ENCODE measurements at regions of chr9 and their contacts with region 1.

Region 1: GRCh38 chr9:78369639-78370219 is 72.8 kb downstream of the PSAT1 start:
- DNase-seq: peak; percentile 79
- H3K4me3 ChIP-seq: peak overlapping the region in 1 of 2 experiments; percentile 36; a peak in 1 of 4 replicates
- H3K27ac ChIP-seq: no peak overlapping the region
- H3K4me1 ChIP-seq: peaks cover 0 to 5% of the 10 kb centered on the region in 2 experiments; a peak in 1 of 4 replicates
- H3K27me3 ChIP-seq: no peaks in the 10 kb centered on the region; the same call in 1 of the 2 replicates
- CTCF ChIP-seq: peak; percentile 86
- EP300 ChIP-seq: no peak
- RAD21 ChIP-seq: peak; percentile 90

Region 2: DNA sequence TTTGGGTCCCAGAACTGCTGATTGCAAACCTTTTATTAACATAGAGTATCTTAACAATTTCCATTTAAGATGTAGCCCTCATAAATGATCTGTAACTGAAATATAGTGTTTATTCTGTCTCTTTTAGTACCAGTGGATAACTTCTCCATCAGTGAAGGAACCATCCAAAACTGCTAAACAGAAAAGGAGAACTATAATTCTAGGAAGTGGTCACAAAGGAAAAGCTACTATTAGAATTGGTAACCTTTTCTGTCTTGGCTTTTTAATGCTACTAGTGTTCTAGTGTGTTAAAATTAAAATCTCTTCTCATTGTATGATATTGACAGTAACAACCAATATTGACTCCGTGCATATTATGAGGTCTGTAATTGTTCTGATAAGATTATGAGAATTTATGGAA is 121.1 kb before region 1 on chr9:
- CTCF ChIA-PET with region 1: interaction called, 10 read pairs
- POLR2A ChIA-PET with region 1: no interaction called
- DNase-seq: no peak
- H3K4me3 ChIP-seq: no peak overlapping the region
- H3K27ac ChIP-seq: no peak overlapping the region
- H3K4me1 ChIP-seq: peaks cover 0 to 6% of the 10 kb centered on the region in 2 experiments; a peak in 1 of 4 replicates
- H3K27me3 ChIP-seq: no peaks in the 10 kb centered on the region
- CTCF ChIP-seq: no peak
- EP300 ChIP-seq: no peak
- RAD21 ChIP-seq: no peak

Region 3: GRCh38 chr9:78261403-78262001 is 108.2 kb before region 1 on chr9:
- CTCF ChIA-PET with region 1: interaction called, 82 read pairs
- POLR2A ChIA-PET with region 1: no interaction called
- DNase-seq: peak; percentile 40
- H3K4me3 ChIP-seq: no peak overlapping the region; a peak in 1 of 4 replicates
- H3K27ac ChIP-seq: no peak overlapping the region
- H3K4me1 ChIP-seq: no peaks in the 10 kb centered on the region; a peak in 1 of 4 replicates
- H3K27me3 ChIP-seq: no peaks in the 10 kb centered on the region
- CTCF ChIP-seq: peak; percentile 75
- EP300 ChIP-seq: no peak
- RAD21 ChIP-seq: peak; percentile 80

Region 4: GRCh38 chr9:78325343-78325742 is 44.4 kb before region 1 on chr9:
- CTCF ChIA-PET with region 1: interaction called, 11 read pairs
- POLR2A ChIA-PET with region 1: no interaction called
- DNase-seq: peak; percentile 76
- H3K4me3 ChIP-seq: no peak overlapping the region
- H3K27ac ChIP-seq: peak overlapping the region in 1 of 2 experiments; percentile 99; a peak in 2 of 4 replicates
- H3K4me1 ChIP-seq: peaks cover 0 to 36% of the 10 kb centered on the region in 2 experiments; a peak in 2 of 4 replicates
- H3K27me3 ChIP-seq: no peaks in the 10 kb centered on the region
- CTCF ChIP-seq: no peak
- EP300 ChIP-seq: peak; percentile 25 to 90; a peak in 3 of 4 replicates
- RAD21 ChIP-seq: no peak

Region 5: GRCh38 chr9:78357165-78357873 is 12.4 kb before region 1 on chr9:
- CTCF ChIA-PET with region 1: interaction called, 24 read pairs
- POLR2A ChIA-PET with region 1: no interaction called
- DNase-seq: no peak
- H3K4me3 ChIP-seq: no peak overlapping the region
- H3K27ac ChIP-seq: no peak overlapping the region
- H3K4me1 ChIP-seq: peaks cover 0 to 20% of the 10 kb centered on the region in 2 experiments; a peak in 2 of 4 replicates
- H3K27me3 ChIP-seq: no peaks in the 10 kb centered on the region
- CTCF ChIP-seq: no peak
- EP300 ChIP-seq: no peak
- RAD21 ChIP-seq: no peak

Region 6: GRCh38 chr9:78383130-78383529 is 13.4 kb after region 1 on chr9:
- CTCF ChIA-PET with region 1: interaction called, 17 read pairs
- POLR2A ChIA-PET with region 1: no interaction called
- DNase-seq: no peak
- H3K4me3 ChIP-seq: no peak overlapping the region
- H3K27ac ChIP-seq: no peak overlapping the region
- H3K4me1 ChIP-seq: 0 out of 4 replicates have a peak, but pooled peaks cover 0 to 3% of the 10 kb centered on the region in 2 experiments
- H3K27me3 ChIP-seq: no peaks in the 10 kb centered on the region
- CTCF ChIP-seq: no peak
- EP300 ChIP-seq: no peak
- RAD21 ChIP-seq: no peak

Region 7: GRCh38 chr9:78397454-78397853 is 27.7 kb after region 1 on chr9:
- CTCF ChIA-PET with region 1: interaction called, 12 read pairs
- POLR2A ChIA-PET with region 1: no interaction called
- DNase-seq: peak; percentile 50
- H3K4me3 ChIP-seq: no peak overlapping the region
- H3K27ac ChIP-seq: peak overlapping the region in 1 of 2 experiments; percentile 67; a peak in 2 of 4 replicates
- H3K4me1 ChIP-seq: peaks cover 0 to 15% of the 10 kb centered on the region in 2 experiments; a peak in 2 of 4 replicates
- H3K27me3 ChIP-seq: no peaks in the 10 kb centered on the region; the same call in 1 of the 2 replicates
- CTCF ChIP-seq: no peak
- EP300 ChIP-seq: peak in 1 of 2 experiments; percentile 46; a peak in 1 of 4 replicates
- RAD21 ChIP-seq: no peak